HepG2 (cell line): ENCODE measurements at regions of chr11 and their contacts with region 1.

Region 1: GRCh38 chr11:43419460-43419859 is 60.7 kb downstream of the TTC17 start:
- DNase-seq: peak; percentile 25
- ATAC-seq: peak; percentile 69
- H3K4me3 ChIP-seq: no peak overlapping the region
- H3K27ac ChIP-seq: no peak overlapping the region
- H3K4me1 ChIP-seq: no peaks in the 10 kb centered on the region
- H3K27me3 ChIP-seq: no peaks in the 10 kb centered on the region
- CTCF ChIP-seq: peak; percentile 53
- EP300 ChIP-seq: no peak
- POLR2A ChIP-seq: no peak
- RAD21 ChIP-seq: no peak

Region 2: DNA sequence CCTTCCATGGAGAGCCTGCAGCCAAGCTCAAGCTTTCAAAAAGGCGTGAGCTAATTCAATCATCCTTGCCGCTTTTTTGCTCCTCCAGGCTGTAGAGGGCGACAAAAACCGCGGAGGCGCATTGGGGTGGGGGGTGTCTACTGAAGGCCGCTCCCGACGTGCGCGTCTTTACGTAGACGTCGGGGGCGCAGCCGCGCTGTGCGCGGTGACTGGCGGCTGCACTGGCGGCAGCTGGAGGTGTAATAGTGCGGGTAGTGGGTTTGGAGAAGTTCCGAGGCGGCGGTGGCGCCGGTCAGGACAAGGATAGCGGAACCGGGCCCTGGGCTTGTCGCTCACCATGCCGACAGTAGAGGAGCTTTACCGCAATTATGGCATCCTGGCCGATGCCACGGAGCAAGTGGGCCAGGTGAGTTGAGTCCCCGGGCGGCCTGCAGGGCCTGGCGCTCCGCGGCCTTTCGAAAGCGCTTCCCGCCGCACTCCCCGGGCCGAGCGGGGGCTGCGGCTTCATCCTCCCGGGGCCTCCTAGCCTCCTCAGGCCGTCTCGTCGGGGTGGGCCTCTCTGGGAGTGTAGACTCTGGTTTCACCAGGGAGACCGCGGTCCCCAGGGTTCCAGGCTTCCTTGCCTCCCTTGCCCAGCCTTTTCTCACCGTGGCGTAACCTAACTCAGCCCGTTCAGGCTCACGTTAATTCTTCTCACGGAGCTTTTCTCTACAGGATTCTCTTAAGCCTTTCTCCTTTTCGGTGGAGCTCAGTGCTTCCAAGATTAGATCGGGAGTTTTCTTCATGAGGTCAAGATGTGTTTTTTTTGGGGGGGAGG is 107.5 kb before region 1 on chr11 and contains the start of gene API5:
- CTCF ChIA-PET with region 1: interaction called, 3 read pairs
- POLR2A ChIA-PET with region 1: interaction called, 4 read pairs
- in situ Hi-C with region 1: no loop called
- intact Hi-C with region 1: loop called (anchors 1 kb)
- DNase-seq: peak; percentile 89
- ATAC-seq: peak; percentile 99
- H3K4me3 ChIP-seq: peak within 1 kb of the TSS; percentile 91 to 97 (median 93)
- H3K27ac ChIP-seq: peak within 1 kb of the TSS; percentile 83
- H3K4me1 ChIP-seq: peaks cover 21% of the 10 kb centered on the region
- H3K27me3 ChIP-seq: no peaks in the 10 kb centered on the region
- CTCF ChIP-seq: peak; percentile 95
- EP300 ChIP-seq: 0 out of 4 replicates have a peak, but pooled peaks of 1 of the 2 experiments have one; percentile 33
- POLR2A ChIP-seq: peak; percentile 80 to 92
- RAD21 ChIP-seq: no peak
- total RNA-seq, gene API5: 59.0 and 93.6 TPM in 2 replicates

Region 3: DNA sequence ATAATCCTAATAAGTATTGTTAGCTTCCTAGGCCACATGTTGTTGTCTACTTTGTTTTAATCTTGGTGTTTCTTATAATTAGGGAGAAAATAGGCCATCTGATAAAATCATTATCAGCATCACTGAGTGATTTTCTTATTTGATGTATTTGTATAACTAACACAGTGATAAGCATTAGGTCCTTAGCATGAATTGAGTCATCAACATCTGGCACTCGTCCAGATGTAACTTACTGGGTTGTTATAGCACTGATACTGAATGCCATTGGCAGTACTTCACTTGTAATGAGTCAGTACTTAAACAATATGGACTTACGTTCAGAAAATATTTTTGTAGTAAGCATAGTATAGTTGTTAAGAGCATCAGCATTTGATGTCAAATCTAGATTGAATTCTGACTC is 91.5 kb before region 1 on chr11:
- CTCF ChIA-PET with region 1: no interaction called
- POLR2A ChIA-PET with region 1: no interaction called
- in situ Hi-C with region 1: loop called (anchors 10 kb)
- intact Hi-C with region 1: no loop called
- DNase-seq: peak; percentile 27
- ATAC-seq: no peak
- H3K4me3 ChIP-seq: no peak overlapping the region
- H3K27ac ChIP-seq: no peak overlapping the region
- H3K4me1 ChIP-seq: no peaks in the 10 kb centered on the region
- H3K27me3 ChIP-seq: no peaks in the 10 kb centered on the region
- CTCF ChIP-seq: no peak
- EP300 ChIP-seq: no peak
- POLR2A ChIP-seq: no peak
- RAD21 ChIP-seq: no peak

Region 4: GRCh38 chr11:43504316-43504950 is 85.0 kb after region 1 on chr11:
- CTCF ChIA-PET with region 1: no interaction called
- POLR2A ChIA-PET with region 1: no interaction called
- in situ Hi-C with region 1: no loop called
- intact Hi-C with region 1: no loop called
- DNase-seq: peak; percentile 38
- ATAC-seq: peak; percentile 96
- H3K4me3 ChIP-seq: no peak overlapping the region
- H3K27ac ChIP-seq: no peak overlapping the region
- H3K4me1 ChIP-seq: no peaks in the 10 kb centered on the region
- H3K27me3 ChIP-seq: peaks cover 2 to 7% of the 10 kb centered on the region in 2 experiments; a peak in 3 of 5 replicates
- CTCF ChIP-seq: peak; percentile 81
- EP300 ChIP-seq: no peak
- POLR2A ChIP-seq: no peak
- RAD21 ChIP-seq: peak; percentile 80